Dendritic cell treated with granulocyte-macrophage colony-stimulating factor and Interleukin-4, amounts not matched to agents 40 ng/mL and 50 ng/mL, for 4 days (primary cell): ENCODE measurements at regions of chr19 and their contacts with region 1.

Region 1: GRCh38 chr19:10695401-10696398 is 5.5 kb upstream of the QTRT1 start:
- H3K4me3 Mint-ChIP-seq: peak overlapping the region; percentile 79
- H3K27ac Mint-ChIP-seq: no peak overlapping the region
- H3K4me1 Mint-ChIP-seq: peaks cover 19% of the 10 kb centered on the region
- H3K27me3 Mint-ChIP-seq: peaks cover 15% of the 10 kb centered on the region

Region 2: DNA sequence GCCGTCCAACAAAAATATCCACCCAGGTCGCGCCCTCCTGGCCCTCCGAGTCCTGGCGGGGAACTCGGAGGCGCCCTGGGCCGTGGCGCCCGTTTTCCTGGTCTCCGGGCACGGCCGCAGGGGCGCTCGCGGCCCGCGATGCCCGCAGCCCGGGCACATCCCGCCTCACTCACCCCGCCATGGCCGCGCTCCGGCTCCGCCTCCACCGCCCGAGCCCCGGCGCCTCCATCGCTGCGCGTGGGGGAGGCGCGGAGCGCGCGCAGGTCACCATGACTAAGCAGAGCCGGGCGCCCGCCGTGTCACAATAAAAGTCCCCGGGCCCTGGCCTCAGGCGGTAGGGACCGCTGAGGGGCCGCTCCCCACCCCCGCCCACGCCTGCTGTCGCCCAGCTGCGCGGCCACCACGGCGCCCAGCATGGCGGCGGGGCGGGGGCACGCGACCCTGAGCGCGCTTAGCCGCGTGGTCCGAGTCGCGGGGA is 193.1 kb before region 1 on chr19:
- intact Hi-C with region 1: loop called (anchors 10 kb)
- H3K4me3 Mint-ChIP-seq: peak overlapping the region; percentile 84
- H3K27ac Mint-ChIP-seq: peak overlapping the region; percentile 94
- H3K4me1 Mint-ChIP-seq: peaks cover 47% of the 10 kb centered on the region
- H3K27me3 Mint-ChIP-seq: no peaks in the 10 kb centered on the region

Region 3: GRCh38 chr19:10565567-10566407 is 129.9 kb before region 1 on chr19 and contains the start of gene KRI1:
- intact Hi-C with region 1: loop called (anchors 5 kb)
- H3K4me3 Mint-ChIP-seq: peak within 1 kb of the TSS; percentile 92
- H3K27ac Mint-ChIP-seq: peak within 1 kb of the TSS; percentile 88
- H3K4me1 Mint-ChIP-seq: peaks cover 50% of the 10 kb centered on the region
- H3K27me3 Mint-ChIP-seq: no peaks in the 10 kb centered on the region

Region 4: DNA sequence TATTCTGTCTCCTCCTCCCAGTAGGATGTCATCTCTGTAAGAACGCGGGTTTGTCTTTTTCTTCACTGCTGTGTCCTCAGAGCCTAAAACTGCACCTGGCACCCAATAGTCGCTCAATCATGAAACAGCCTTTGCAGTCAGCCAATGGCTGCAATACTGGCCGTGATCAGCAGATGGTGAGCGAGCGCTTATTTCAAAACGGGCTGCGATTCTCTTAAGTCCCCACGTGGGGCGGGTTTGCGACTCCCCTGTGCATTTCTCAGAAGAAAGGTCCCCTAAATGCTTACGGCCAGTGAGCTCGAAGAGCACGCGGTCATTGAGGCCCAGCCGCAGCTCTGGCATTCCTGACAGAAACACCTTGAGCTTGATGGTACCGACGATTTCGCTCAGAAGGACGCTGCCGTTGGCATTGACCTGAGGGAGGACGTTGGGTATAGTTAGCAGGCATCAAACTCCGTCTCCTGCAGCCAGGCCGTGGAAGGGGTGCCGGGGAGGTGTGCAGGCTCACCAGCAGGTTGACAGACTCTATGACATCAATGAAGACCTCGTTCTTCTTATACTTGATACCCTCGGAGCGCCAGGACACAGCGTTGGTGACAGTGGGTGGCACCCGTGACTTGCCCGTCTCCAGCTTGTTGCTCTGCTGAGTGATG is 114.6 kb before region 1 on chr19:
- intact Hi-C with region 1: loop called (anchors 1 kb)
- H3K4me3 Mint-ChIP-seq: no peak overlapping the region
- H3K27ac Mint-ChIP-seq: no peak overlapping the region
- H3K4me1 Mint-ChIP-seq: no peaks in the 10 kb centered on the region
- H3K27me3 Mint-ChIP-seq: peaks cover 6% of the 10 kb centered on the region

Region 5: DNA sequence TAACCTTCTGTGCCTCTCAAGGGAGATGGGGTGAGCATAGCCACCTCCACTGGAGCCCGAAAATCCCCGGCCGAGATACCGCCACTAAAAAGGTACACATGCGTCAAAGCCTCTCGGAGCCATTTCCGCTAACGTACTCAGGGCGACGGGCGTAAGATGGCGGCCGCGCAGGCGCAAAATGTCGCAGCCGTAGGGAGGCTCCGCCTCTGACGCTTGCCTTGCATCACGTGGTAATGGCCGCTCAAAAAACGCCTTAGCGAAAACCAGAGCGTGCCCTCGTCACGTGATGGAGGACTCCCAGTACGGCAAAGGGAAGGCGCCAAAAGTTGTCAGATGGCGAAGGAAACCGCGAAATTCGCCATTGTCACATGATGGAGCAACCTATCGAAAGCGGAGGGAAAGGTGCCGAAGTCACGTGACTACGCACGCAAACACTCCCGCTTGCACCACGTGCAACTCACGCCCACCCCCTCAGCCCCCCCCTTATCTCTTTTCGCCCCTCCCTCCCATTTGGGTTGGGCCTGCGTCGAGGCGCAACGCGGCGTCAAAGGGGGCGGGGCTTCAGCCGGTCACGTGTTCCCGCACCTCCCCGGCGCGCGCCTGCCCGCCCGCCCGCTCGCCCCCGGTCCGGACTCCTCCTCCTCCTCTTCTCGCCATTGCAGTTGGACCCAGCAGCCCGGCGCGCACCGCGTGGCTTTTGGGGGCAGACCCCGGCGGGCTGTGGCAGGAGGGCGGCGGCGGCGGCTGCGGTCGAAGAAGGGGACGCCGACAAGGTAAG is 41.8 kb before region 1 on chr19 and contains the start of gene ILF3:
- intact Hi-C with region 1: loop called (anchors 5 kb)
- H3K4me3 Mint-ChIP-seq: peak within 1 kb of the TSS; percentile 86
- H3K27ac Mint-ChIP-seq: peak within 1 kb of the TSS; percentile 97
- H3K4me1 Mint-ChIP-seq: peaks cover 35% of the 10 kb centered on the region
- H3K27me3 Mint-ChIP-seq: no peaks in the 10 kb centered on the region

Region 6: GRCh38 chr19:10884274-10884673 is 188.6 kb after region 1 on chr19:
- intact Hi-C with region 1: no loop called
- H3K4me3 Mint-ChIP-seq: no peak overlapping the region
- H3K27ac Mint-ChIP-seq: peak overlapping the region; percentile 61
- H3K4me1 Mint-ChIP-seq: peaks cover 56% of the 10 kb centered on the region
- H3K27me3 Mint-ChIP-seq: no peaks in the 10 kb centered on the region